ENCODE measurements at regions of chr14 and their contacts with region 1.

Region 1: DNA sequence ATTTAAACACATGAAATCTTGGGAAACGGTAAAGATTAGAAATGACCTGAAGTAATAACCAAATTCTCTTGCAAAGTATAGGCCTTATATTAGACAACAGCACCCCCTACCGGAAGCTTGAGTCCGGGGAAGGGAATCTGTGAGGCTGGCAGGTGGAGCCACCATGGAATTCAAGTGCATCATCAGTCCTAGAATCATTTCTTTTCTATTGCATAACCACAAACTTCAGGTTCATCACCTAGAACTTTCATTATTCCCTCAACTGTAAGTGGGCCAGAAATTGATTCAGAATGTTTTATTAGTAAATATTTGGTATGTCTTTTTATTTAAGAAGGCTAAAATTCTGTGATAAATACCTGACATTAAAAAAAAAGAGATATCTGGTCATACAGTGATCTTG is 48.5 kb downstream of the AP5M1 start:
- DNase-seq: peak; percentile 68 to 78
- H3K4me3 ChIP-seq: no peak overlapping the region
- H3K27ac ChIP-seq: no peak overlapping the region
- H3K4me1 ChIP-seq: no peaks in the 10 kb centered on the region
- H3K27me3 ChIP-seq: no peaks in the 10 kb centered on the region
- CTCF ChIP-seq: peak in 5 of 6 experiments; percentile 26 to 82 (median 71)
- POLR2A ChIP-seq: no peak

Region 2: DNA sequence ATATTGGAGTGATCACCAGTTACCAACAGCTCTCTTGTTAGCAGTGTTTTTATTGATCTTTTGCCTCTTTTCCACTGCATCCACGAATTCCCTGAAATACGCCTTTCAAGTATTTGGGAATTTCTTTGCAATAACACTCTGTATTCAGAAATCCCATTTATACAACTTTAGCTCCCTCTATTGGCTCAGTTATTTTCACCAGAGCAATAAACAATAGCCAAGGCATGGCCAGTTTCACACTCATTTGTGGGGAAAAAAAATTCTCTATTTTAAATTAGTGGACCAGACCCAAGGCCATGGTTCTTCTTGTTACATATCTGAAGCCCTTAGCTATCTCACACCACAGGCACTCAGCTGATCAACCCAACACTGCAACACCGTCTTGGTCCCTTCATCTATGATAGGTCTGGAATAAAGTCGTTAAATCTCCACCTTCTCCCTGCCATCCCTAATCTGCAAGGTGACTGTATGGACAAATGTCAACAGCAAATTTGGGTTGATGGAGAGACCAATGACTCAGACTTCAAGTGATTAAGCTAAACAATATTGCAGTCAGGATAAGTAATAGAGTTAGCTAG is 830.1 kb before region 1 on chr14:
- intact Hi-C with region 1: loop called (anchors 5 kb)
- DNase-seq: no peak
- H3K4me3 ChIP-seq: no peak overlapping the region
- H3K27ac ChIP-seq: no peak overlapping the region
- H3K4me1 ChIP-seq: no peaks in the 10 kb centered on the region
- H3K27me3 ChIP-seq: no peaks in the 10 kb centered on the region
- CTCF ChIP-seq: peak in 2 of 6 experiments; percentile 23 to 26
- POLR2A ChIP-seq: no peak

Region 3: DNA sequence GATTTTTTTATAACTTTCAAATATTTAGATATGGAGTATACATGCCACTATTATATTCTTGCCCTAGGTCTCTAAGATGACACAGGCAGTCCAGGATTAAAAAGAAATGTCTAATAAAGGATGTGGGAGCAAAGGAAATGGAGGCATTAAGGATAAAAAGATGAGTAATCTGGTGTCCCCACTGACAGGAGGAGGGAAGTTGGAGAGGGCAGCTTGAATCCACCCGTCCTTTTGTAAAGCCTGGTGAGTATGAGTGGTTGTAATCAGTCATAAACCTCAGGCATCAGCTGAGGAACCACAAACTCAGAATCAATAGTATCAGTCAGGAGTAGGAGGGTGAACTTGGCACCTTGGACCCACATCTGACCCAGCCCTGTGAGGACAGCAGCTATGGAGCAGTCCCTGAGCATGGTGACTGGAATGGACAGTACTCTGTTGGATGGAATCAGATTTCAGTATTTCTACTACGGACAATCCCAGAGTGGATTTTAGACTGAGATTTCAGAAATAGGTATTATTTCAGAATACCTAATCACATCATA is 149.1 kb before region 1 on chr14:
- intact Hi-C with region 1: no loop called
- DNase-seq: no peak
- H3K4me3 ChIP-seq: no peak overlapping the region
- H3K27ac ChIP-seq: no peak overlapping the region
- H3K4me1 ChIP-seq: no peaks in the 10 kb centered on the region
- H3K27me3 ChIP-seq: no peaks in the 10 kb centered on the region
- CTCF ChIP-seq: no peak
- POLR2A ChIP-seq: no peak

Region 4: DNA sequence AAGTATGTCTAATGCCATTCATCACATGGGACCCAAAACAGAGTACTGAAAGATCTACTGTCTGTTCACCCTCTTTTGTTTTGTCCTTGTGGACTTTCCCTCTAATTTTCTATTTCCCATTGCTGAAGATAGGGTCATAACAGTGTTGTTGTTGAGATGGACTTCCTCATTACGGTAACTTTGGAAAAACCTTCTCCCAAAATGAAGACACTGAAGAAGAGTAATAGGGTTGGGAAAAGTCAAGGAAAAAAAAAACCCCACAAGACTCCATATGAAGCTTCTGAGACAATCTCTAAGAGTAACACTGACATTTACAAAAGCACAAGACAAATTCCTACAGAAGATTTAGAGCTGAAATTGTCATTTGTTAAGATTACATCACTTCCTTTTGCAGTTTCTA is 85.3 kb before region 1 on chr14:
- intact Hi-C with region 1: no loop called
- DNase-seq: no peak
- H3K4me3 ChIP-seq: no peak overlapping the region
- H3K27ac ChIP-seq: no peak overlapping the region
- H3K4me1 ChIP-seq: no peaks in the 10 kb centered on the region
- H3K27me3 ChIP-seq: no peaks in the 10 kb centered on the region
- CTCF ChIP-seq: no peak
- POLR2A ChIP-seq: no peak

Measured in thyroid gland (tissue), 4 donors.